Common myeloid progenitor, CD34-positive (primary cell): ENCODE measurements at regions of chr19 and their contacts with region 1.

Region 1: GRCh38 chr19:43595999-43596841 is at the starts of genes IRGQ and ZNF576:
- DNase-seq: peak; percentile 99 to 100 (median 99)
- H3K4me3 ChIP-seq: peak within 1 kb of the TSS; percentile 74 to 98 (median 92)
- H3K27ac ChIP-seq: peak within 1 kb of the TSS; percentile 99 to 100
- H3K4me1 ChIP-seq: peaks cover 23 to 43% (median 36%) of the 10 kb centered on the region in 4 experiments
- H3K27me3 ChIP-seq: no peaks in the 10 kb centered on the region

Region 2: GRCh38 chr19:43498233-43498842 is 97.9 kb before region 1 on chr19:
- CTCF ChIA-PET with region 1: no interaction called
- POLR2A ChIA-PET with region 1: no interaction called
- DNase-seq: no peak
- H3K4me3 ChIP-seq: no peak overlapping the region
- H3K27ac ChIP-seq: no peak overlapping the region
- H3K4me1 ChIP-seq: peaks cover 0 to 8% (median 5%) of the 10 kb centered on the region in 4 experiments
- H3K27me3 ChIP-seq: no peaks in the 10 kb centered on the region

Region 3: GRCh38 chr19:43526884-43527859 is 69.0 kb before region 1 on chr19 and contains the start of gene ETHE1:
- CTCF ChIA-PET with region 1: interaction called, 12 read pairs
- POLR2A ChIA-PET with region 1: no interaction called
- DNase-seq: peak; percentile 34 to 70 (median 55)
- H3K4me3 ChIP-seq: peak within 1 kb of the TSS; percentile 81 to 96 (median 88)
- H3K27ac ChIP-seq: peak within 1 kb of the TSS in 1 of 2 experiments; percentile 74
- H3K4me1 ChIP-seq: peaks cover 0 to 41% (median 33%) of the 10 kb centered on the region in 4 experiments
- H3K27me3 ChIP-seq: no peaks in the 10 kb centered on the region

Region 4: DNA sequence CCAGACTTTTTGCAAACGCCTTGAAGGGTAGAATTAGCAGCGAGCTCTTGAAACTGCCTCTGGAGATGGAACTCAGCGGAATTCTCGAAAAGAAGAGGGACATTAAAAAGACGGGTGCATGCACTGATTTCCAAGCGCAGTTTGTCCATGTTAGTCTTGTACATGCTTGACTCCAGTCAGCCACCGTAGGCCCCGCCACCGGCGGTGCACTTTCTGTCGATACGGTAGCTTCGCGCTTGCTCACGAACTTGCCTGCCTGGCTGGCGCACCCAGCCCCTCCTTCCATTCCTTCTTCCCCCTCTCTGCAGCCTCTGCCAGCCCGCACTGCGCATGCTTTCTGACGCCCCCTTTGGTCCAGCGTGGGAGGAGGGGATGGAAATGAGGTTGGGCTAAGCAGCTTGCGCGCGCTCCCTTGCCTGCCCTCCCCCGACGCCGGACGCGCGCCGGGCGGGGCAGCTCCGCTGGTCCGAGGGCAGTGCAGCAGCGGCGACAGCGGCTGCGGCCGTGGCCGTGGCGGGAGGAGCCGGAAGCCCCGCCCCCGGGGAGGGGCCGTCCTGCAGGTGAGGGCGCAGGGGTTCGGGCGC is 63.2 kb before region 1 on chr19 and contains the start of gene ZNF575:
- CTCF ChIA-PET with region 1: interaction called, 46 read pairs
- POLR2A ChIA-PET with region 1: interaction called, 6 read pairs
- DNase-seq: peak; percentile 92 to 96 (median 94)
- H3K4me3 ChIP-seq: peak within 1 kb of the TSS; percentile 69 to 90 (median 76)
- H3K27ac ChIP-seq: peak within 1 kb of the TSS in 1 of 2 experiments; percentile 15
- H3K4me1 ChIP-seq: peaks cover 0 to 29% (median 25%) of the 10 kb centered on the region in 4 experiments
- H3K27me3 ChIP-seq: no peaks in the 10 kb centered on the region

Region 5: DNA sequence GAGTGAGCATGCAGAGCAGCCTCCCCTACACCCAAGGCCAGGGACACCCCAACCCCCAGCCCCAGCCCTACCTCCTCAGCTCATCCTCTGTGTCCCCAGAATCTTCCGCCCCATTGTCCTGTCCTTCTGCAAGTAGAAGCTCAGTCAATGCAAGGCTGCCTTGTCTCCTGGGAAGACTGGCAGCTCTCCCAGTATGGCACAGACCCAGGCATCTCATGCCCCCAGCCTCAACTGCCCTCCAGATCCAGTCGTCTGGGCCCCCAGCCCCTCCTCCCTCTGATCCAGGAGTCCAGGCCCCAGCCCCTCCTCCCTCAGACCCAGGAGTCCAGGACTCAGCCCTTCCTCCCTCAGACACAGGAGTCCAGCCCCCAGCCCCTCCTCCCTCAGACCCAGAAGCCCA is 50.2 kb before region 1 on chr19:
- CTCF ChIA-PET with region 1: interaction called, 10 read pairs
- POLR2A ChIA-PET with region 1: interaction called, 3 read pairs
- DNase-seq: no peak
- H3K4me3 ChIP-seq: no peak overlapping the region
- H3K27ac ChIP-seq: no peak overlapping the region
- H3K4me1 ChIP-seq: no peaks in the 10 kb centered on the region
- H3K27me3 ChIP-seq: no peaks in the 10 kb centered on the region

Region 6: DNA sequence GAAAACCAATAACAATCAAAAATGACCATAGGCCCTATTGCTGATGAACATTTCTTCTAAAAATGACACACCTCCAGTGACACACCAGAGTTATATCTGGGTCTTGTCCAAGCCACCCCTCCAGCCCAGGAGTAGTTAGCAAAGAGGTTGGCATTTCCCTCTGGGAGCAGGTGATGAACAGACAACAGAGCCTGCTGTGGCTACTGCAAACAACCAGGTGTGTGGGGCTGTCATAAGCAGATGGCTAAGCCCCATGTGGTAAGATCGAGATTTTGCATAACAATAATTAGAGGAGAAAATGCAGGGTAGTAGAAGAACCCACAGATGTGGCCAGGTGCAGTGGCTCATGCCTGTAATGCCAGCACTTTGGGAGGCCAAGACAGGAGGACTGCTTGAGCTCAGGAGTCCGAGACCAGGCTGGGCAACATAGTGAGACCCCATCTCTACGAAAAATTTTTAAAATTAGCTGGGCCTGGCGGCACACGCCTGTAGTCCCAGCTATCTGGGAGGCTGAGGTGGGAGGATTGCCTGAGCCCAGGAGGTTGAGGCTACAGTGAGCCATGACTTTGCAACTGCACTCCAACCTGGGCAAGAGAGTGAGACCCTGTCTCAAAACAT is 25.9 kb before region 1 on chr19:
- CTCF ChIA-PET with region 1: interaction called, 247 read pairs
- POLR2A ChIA-PET with region 1: interaction called, 5 read pairs
- DNase-seq: no peak
- H3K4me3 ChIP-seq: no peak overlapping the region
- H3K27ac ChIP-seq: no peak overlapping the region
- H3K4me1 ChIP-seq: peaks cover 4 to 18% (median 14%) of the 10 kb centered on the region in 4 experiments
- H3K27me3 ChIP-seq: no peaks in the 10 kb centered on the region

Region 7: DNA sequence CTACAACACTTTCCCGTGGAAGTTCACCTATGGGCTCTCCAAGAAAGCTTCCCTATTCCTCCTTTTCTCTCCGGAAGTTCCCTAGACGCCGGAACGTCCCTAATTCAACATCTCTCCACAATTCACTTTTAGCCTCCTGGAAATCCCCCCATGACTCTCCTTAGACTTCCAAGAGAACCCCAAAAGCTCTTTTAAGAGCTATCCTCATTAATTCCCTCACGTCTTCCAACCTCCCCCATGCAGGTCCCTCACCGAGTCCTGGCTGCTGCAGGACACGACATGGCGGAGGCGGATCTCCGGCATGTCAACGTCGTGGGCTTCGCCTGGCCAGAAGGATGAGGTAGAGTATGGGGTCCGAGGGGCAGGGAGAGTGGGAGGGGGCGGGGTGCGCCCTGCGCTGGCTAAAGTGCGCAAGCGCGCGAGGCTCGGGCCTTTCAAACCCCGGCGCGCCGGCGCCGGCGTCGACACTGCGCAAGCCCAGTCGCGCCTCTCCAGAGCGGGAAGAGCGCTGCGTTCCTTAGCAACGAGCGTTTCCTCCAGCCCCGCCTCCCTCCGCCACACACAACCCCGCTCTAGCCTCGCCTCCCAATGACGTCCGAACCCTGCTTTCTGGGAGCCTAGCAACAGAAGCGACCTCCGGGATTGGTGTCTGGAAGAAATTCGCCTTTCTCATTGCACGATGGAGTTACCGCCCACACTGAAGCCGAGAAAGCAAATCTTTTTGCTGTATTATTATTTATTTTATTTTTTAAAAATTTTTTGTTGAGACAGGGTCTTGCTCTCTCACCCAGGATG is 20.9 kb before region 1 on chr19 and contains the starts of genes PINLYP and XRCC1:
- CTCF ChIA-PET with region 1: interaction called, 13 read pairs
- POLR2A ChIA-PET with region 1: interaction called, 5 read pairs
- DNase-seq: peak; percentile 99 to 100 (median 99)
- H3K4me3 ChIP-seq: peak within 1 kb of the TSS; percentile 74 to 98 (median 90)
- H3K27ac ChIP-seq: peak within 1 kb of the TSS; percentile 90 to 97
- H3K4me1 ChIP-seq: peaks cover 4 to 30% (median 22%) of the 10 kb centered on the region in 4 experiments
- H3K27me3 ChIP-seq: no peaks in the 10 kb centered on the region

Region 8: DNA sequence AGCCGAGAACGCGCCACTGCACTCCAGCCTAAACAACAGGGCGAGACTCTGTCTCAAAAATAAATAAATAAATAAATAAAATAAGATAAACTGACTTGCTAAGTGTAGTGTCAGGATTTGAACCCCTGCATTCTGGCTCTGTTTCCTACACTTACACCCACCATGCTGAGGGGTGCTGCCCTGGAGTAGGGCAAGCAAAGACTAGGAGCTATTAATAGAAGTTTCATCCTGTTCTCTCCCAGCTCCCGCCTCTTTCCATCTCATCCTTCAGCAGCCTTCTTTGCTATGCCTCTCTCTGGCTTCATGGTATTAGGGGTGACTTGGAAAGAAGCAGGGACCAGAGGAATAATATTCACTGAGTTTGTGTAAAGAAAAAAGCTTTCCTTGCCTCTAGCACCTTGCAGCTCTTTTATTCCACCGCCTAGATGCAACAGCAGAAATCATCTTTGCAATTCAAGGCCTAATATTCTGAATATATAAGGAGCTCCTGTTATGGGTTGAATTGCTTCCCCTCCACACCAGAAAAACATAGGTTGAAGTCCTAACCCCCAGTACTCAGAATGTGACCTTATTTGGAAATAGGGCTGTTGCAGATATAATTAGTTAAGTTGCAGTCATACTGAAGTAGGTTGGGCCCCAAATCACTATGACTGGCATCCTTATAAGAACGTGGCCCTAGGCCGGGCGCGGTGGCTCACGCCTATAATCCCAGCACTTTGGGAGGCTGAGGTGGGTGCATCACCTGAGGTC is 82.5 kb after region 1 on chr19:
- CTCF ChIA-PET with region 1: no interaction called
- POLR2A ChIA-PET with region 1: no interaction called
- DNase-seq: no peak
- H3K4me3 ChIP-seq: no peak overlapping the region
- H3K27ac ChIP-seq: no peak overlapping the region
- H3K4me1 ChIP-seq: peaks cover 1 to 17% (median 8%) of the 10 kb centered on the region in 4 experiments
- H3K27me3 ChIP-seq: no peaks in the 10 kb centered on the region